AG04449 (cell line): ENCODE measurements at regions of chr6 and their contacts with region 1.

Region 1: GRCh38 chr6:72411872-72412708 is 209.8 kb upstream of the KCNQ5 start:
- DNase-seq: peak; percentile 44
- H3K4me3 ChIP-seq: no peak overlapping the region
- CTCF ChIP-seq: peak; percentile 100

Region 2: DNA sequence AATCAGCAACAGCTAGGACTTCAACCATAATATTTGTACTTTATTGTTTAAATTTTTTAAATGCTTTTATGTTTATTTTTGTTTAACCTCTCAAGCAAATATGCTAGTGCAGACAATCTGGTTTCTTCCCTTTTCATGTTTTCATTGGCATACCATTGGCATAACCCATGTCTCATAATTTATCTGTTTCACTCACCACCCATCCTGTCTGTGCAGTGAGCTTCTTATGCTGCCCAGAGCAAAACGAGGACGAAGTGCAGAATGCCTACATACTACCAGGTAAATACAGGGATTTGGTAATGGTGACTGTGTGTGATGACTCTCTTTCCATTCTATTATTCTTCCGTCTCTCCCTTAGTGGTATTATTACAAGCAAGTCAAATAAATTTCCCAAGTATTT is 151.6 kb before region 1 on chr6:
- CTCF ChIA-PET with region 1: interaction called, 16 read pairs
- POLR2A ChIA-PET with region 1: no interaction called
- DNase-seq: peak; percentile 12
- H3K4me3 ChIP-seq: no peak overlapping the region; the same call in 1 of the 2 replicates
- CTCF ChIP-seq: no peak

Region 3: DNA sequence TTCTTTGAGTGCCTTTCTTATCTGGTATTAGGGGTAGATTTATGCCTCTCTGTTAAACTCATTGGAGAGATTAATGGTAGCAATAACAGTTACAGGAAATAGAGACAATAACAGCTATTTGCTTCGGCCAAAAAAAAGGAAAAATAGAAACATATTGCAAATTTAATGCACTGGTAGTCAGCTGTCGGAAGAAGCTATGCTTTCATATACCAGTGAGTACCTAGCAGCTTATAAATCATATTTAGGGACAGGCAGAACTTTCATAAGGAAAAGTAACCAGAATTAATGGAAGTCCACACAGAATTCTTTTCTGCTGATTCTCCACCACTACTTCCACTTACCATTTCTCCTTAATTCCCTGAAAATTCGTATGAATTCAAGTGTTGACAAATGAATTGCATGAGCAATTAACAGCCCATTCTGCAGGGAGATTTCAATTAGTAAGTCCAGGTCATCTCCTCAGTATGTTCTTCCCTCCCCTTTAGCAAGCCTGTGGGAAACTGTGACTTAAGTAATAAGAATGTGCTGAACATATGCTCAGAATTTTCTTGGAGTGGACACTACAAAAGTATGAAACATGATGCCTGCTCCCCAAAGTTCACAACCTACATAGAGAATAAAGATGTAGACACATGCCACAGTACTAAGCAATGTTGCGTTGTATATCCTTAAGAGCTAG is 13.1 kb after region 1 on chr6:
- CTCF ChIA-PET with region 1: interaction called, 62 read pairs
- POLR2A ChIA-PET with region 1: no interaction called
- DNase-seq: peak; percentile 95
- H3K4me3 ChIP-seq: no peak overlapping the region
- CTCF ChIP-seq: no peak

Region 4: GRCh38 chr6:72560721-72561593 is 148.9 kb after region 1 on chr6:
- CTCF ChIA-PET with region 1: interaction called, 11 read pairs
- POLR2A ChIA-PET with region 1: no interaction called
- DNase-seq: no peak
- H3K4me3 ChIP-seq: no peak overlapping the region
- CTCF ChIP-seq: no peak

Region 5: DNA sequence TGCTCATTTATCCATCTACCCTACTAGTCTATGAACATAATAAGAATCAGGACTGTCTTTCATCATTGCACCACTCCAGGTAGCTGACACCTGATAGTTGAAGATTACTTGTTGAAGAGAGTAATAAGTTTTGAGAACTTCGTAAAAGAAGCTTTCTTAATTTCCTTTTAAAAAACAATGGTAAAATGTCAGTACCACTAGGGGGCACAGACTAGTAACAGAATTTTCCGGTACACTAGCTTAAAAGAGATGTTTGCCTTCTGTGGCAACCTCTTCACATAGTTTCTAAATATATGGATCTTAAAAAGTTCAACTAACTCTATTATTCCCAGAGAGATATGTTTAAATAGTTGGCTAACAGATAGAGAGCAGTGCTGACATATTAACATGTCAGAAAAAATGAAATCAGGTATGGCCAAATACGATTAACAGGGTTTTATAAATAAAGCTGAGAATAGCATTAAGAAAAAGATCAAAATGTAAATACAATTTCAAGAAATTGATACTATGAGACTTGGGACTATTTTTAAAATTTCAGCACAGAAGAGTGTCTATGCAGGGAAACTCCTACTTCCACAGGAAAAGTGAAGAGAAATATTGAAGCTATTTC is 204.4 kb after region 1 on chr6:
- CTCF ChIA-PET with region 1: interaction called, 199 read pairs
- POLR2A ChIA-PET with region 1: no interaction called
- DNase-seq: no peak
- H3K4me3 ChIP-seq: no peak overlapping the region
- CTCF ChIP-seq: peak; percentile 42

Region 6: GRCh38 chr6:72946774-72947173 is 534.7 kb after region 1 on chr6:
- CTCF ChIA-PET with region 1: no interaction called
- POLR2A ChIA-PET with region 1: no interaction called
- DNase-seq: no peak
- H3K4me3 ChIP-seq: no peak overlapping the region
- CTCF ChIP-seq: no peak

Region 7: GRCh38 chr6:73129653-73130443 is 717.8 kb after region 1 on chr6:
- CTCF ChIA-PET with region 1: interaction called, 24 read pairs
- POLR2A ChIA-PET with region 1: no interaction called
- DNase-seq: no peak
- H3K4me3 ChIP-seq: no peak overlapping the region
- CTCF ChIP-seq: peak; percentile 93